H1 (cell line): ENCODE measurements at regions of chr6 and their contacts with region 1.

Region 1: DNA sequence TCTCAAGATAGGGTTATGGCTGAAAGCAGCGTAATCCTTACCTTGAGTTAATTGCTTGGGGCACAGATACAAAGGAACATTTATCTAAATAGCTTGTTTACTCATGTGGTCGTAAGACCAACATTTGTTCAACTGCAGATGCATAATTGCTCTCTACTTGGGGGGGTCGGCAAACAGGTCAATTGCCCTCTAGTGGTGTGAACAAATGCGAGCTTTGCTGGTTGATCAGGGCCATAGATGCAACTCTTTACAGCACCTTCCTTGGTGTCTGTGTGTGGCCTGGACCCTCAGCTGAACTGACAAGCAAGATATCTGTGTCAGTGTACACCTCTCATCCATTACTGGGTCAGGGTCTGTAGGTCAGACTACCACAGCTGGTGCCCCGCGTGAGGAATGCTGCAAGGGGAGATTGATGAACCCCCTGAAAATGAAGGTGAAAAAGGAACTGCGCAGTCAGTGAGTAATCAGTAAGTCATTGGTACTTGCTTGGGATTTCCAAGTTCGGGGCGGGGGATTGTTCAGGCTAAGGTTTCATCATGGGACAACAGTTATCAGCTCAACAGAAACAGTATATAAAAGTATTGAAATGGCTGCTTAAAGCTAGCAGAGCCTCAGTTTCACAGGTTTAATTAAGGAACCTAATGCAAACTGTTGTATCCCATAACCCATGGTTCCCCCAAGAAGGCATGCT is 24.0 kb downstream of the HLA-DPA1 start:
- DNase-seq: no peak
- H3K4me3 ChIP-seq: no peak overlapping the region
- H3K27ac ChIP-seq: no peak overlapping the region
- H3K4me1 ChIP-seq: peaks cover 6 to 10% (median 7%) of the 10 kb centered on the region in 4 experiments; a peak in 4 of 7 replicates
- H3K27me3 ChIP-seq: no peaks in the 10 kb centered on the region
- CTCF ChIP-seq: peak; percentile 46 to 72 (median 56)
- EP300 ChIP-seq: no peak
- POLR2A ChIP-seq: no peak
- RAD21 ChIP-seq: peak; percentile 20 to 23; a peak in 2 of 4 replicates

Region 2: GRCh38 chr6:33036535-33036934 is 12.9 kb before region 1 on chr6:
- CTCF ChIA-PET with region 1: interaction called, 22 read pairs
- POLR2A ChIA-PET with region 1: interaction called, 3 read pairs
- DNase-seq: no peak
- H3K4me3 ChIP-seq: no peak overlapping the region
- H3K27ac ChIP-seq: no peak overlapping the region
- H3K4me1 ChIP-seq: no peaks in the 10 kb centered on the region
- H3K27me3 ChIP-seq: no peaks in the 10 kb centered on the region
- CTCF ChIP-seq: no peak
- EP300 ChIP-seq: no peak
- POLR2A ChIP-seq: no peak
- RAD21 ChIP-seq: no peak

Region 3: GRCh38 chr6:33064723-33065122 is 15.3 kb after region 1 on chr6:
- CTCF ChIA-PET with region 1: interaction called, 10 read pairs
- POLR2A ChIA-PET with region 1: no interaction called
- DNase-seq: no peak
- H3K4me3 ChIP-seq: no peak overlapping the region
- H3K27ac ChIP-seq: no peak overlapping the region
- H3K4me1 ChIP-seq: 0 out of 7 replicates have a peak, but pooled peaks cover 0 to 2% (median 0%) of the 10 kb centered on the region in 4 experiments
- H3K27me3 ChIP-seq: no peaks in the 10 kb centered on the region
- CTCF ChIP-seq: no peak
- EP300 ChIP-seq: no peak
- POLR2A ChIP-seq: no peak
- RAD21 ChIP-seq: no peak

Region 4: GRCh38 chr6:33075568-33076405 is 26.3 kb after region 1 on chr6 and contains the start of gene HLA-DPB1:
- CTCF ChIA-PET with region 1: interaction called, 38 read pairs
- POLR2A ChIA-PET with region 1: no interaction called
- DNase-seq: no peak
- H3K4me3 ChIP-seq: no peak within 1 kb of the TSS
- H3K27ac ChIP-seq: no peak within 1 kb of the TSS
- H3K4me1 ChIP-seq: peaks cover 0 to 2% (median 0%) of the 10 kb centered on the region in 4 experiments; a peak in 2 of 7 replicates
- H3K27me3 ChIP-seq: 0 out of 7 replicates have a peak, but pooled peaks cover 0 to under 1% (median 0%) of the 10 kb centered on the region in 4 experiments
- CTCF ChIP-seq: no peak
- EP300 ChIP-seq: no peak
- POLR2A ChIP-seq: no peak
- RAD21 ChIP-seq: no peak
- total RNA-seq, gene HLA-DPB1: 32.3 and 37.8 TPM in 2 replicates

Region 5: GRCh38 chr6:33082702-33083101 is 33.2 kb after region 1 on chr6:
- CTCF ChIA-PET with region 1: interaction called, 38 read pairs
- POLR2A ChIA-PET with region 1: interaction called, 3 read pairs
- DNase-seq: peak in 1 of 2 experiments; percentile 65
- H3K4me3 ChIP-seq: no peak overlapping the region
- H3K27ac ChIP-seq: no peak overlapping the region
- H3K4me1 ChIP-seq: peaks cover 2 to 8% (median 5%) of the 10 kb centered on the region in 4 experiments; a peak in 6 of 7 replicates
- H3K27me3 ChIP-seq: peaks cover 0 to 8% (median 3%) of the 10 kb centered on the region in 4 experiments; a peak in 4 of 7 replicates
- CTCF ChIP-seq: peak; percentile 81 to 86 (median 84)
- EP300 ChIP-seq: no peak
- POLR2A ChIP-seq: no peak
- RAD21 ChIP-seq: peak; percentile 74 to 82